HAP-1 (cell line): ENCODE measurements at regions of chr10 and their contacts with region 1.

Region 1: GRCh38 chr10:79374312-79375191 is 27.3 kb downstream of the PPIF start:
- DNase-seq: peak; percentile 45 to 86
- H3K4me3 ChIP-seq: no peak overlapping the region
- H3K4me1 ChIP-seq: no peaks in the 10 kb centered on the region
- H3K27me3 ChIP-seq: peaks cover 4% of the 10 kb centered on the region; the same call in 1 of the 2 replicates

Region 2: DNA sequence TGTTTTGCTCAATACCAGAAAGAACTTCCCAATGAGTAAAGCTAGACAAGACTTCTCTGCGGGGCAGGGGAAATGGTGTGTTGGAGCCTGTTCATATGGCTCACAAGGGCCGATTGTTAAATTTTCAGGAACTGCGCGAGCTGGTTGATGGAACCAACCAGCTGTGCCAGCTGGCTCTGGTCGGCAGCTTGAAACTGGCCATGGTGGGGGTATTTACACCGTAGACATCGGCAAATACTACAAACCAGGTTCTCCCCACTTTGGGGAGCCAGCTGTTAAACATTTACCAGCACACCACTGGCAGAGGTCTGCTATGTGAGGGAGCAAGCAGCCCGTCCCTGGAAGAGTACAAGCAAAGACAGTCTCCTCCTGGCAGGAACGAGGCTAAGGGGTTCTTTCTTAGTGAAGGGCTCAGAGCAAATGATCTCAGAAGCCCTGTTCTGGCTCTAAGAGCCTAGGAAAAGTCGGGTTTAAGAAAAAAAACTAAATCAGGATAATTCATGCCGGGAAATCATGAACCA is 314.6 kb before region 1 on chr10:
- in situ Hi-C with region 1: no loop called
- DNase-seq: no peak
- H3K4me3 ChIP-seq: no peak overlapping the region
- H3K4me1 ChIP-seq: peaks cover 8% of the 10 kb centered on the region; the same call in 1 of the 2 replicates
- H3K27me3 ChIP-seq: no peaks in the 10 kb centered on the region

Region 3: GRCh38 chr10:79487296-79488194 is 113.0 kb after region 1 on chr10:
- in situ Hi-C with region 1: loop called (anchors 5 kb)
- DNase-seq: peak; percentile 56 to 83
- H3K4me3 ChIP-seq: no peak overlapping the region
- H3K4me1 ChIP-seq: no peaks in the 10 kb centered on the region
- H3K27me3 ChIP-seq: no peaks in the 10 kb centered on the region

Region 4: GRCh38 chr10:79552143-79552542 is 177.6 kb after region 1 on chr10:
- in situ Hi-C with region 1: no loop called
- DNase-seq: no peak
- H3K4me3 ChIP-seq: no peak overlapping the region
- H3K4me1 ChIP-seq: no peaks in the 10 kb centered on the region
- H3K27me3 ChIP-seq: peaks cover 3% of the 10 kb centered on the region; the same call in 1 of the 2 replicates

Region 5: GRCh38 chr10:79929409-79929904 is 554.9 kb after region 1 on chr10:
- in situ Hi-C with region 1: loop called (anchors 25 kb)
- DNase-seq: peak; percentile 56 to 89
- H3K4me3 ChIP-seq: no peak overlapping the region
- H3K4me1 ChIP-seq: no peaks in the 10 kb centered on the region
- H3K27me3 ChIP-seq: peaks cover 4% of the 10 kb centered on the region; the same call in 1 of the 2 replicates